Activated naive CD4-positive, alpha-beta T cell treated with anti-CD3 and anti-CD28 coated beads for 36 hours (primary cell): ENCODE measurements at regions of chr4 and their contacts with region 1.

Region 1: GRCh38 chr4:122922877-122923511 is 597 bp upstream of the NUDT6 start:
- DNase-seq: peak; percentile 94
- H3K4me3 Mint-ChIP-seq: peak overlapping the region; percentile 99
- H3K27ac Mint-ChIP-seq: peak overlapping the region; percentile 87
- H3K4me1 Mint-ChIP-seq: peaks cover 11% of the 10 kb centered on the region
- H3K27me3 Mint-ChIP-seq: peaks cover 2% of the 10 kb centered on the region

Region 2: GRCh38 chr4:121823505-121824170 is 1099.4 kb before region 1 on chr4 and contains the start of gene CCNA2:
- CTCF ChIA-PET with region 1: no interaction called
- intact Hi-C with region 1: loop called (anchors 5 kb)
- DNase-seq: peak; percentile 99
- H3K4me3 Mint-ChIP-seq: peak within 1 kb of the TSS; percentile 98
- H3K27ac Mint-ChIP-seq: peak within 1 kb of the TSS; percentile 86
- H3K4me1 Mint-ChIP-seq: peaks cover 20% of the 10 kb centered on the region
- H3K27me3 Mint-ChIP-seq: no peaks in the 10 kb centered on the region
- total RNA-seq, gene CCNA2: 133 to 138 TPM

Region 3: GRCh38 chr4:122151982-122152710 is 770.8 kb before region 1 on chr4 and contains the start of gene BLTP1:
- CTCF ChIA-PET with region 1: no interaction called
- intact Hi-C with region 1: loop called (anchors 1 kb)
- DNase-seq: peak; percentile 88
- H3K4me3 Mint-ChIP-seq: peak within 1 kb of the TSS; percentile 95
- H3K27ac Mint-ChIP-seq: peak within 1 kb of the TSS; percentile 96
- H3K4me1 Mint-ChIP-seq: peaks cover 52% of the 10 kb centered on the region
- H3K27me3 Mint-ChIP-seq: no peaks in the 10 kb centered on the region
- total RNA-seq, gene BLTP1: 20.5 to 23.6 TPM

Region 4: GRCh38 chr4:122458625-122459024 is 464.4 kb before region 1 on chr4:
- CTCF ChIA-PET with region 1: no interaction called
- intact Hi-C with region 1: loop called (anchors 2 kb)
- DNase-seq: peak; percentile 82
- H3K4me3 Mint-ChIP-seq: peak overlapping the region; percentile 68
- H3K27ac Mint-ChIP-seq: peak overlapping the region; percentile 99
- H3K4me1 Mint-ChIP-seq: peaks cover 43% of the 10 kb centered on the region
- H3K27me3 Mint-ChIP-seq: no peaks in the 10 kb centered on the region

Region 5: GRCh38 chr4:122716825-122717448 is 206.1 kb before region 1 on chr4:
- CTCF ChIA-PET with region 1: interaction called, 3 read pairs
- intact Hi-C with region 1: loop called (anchors 5 kb)
- DNase-seq: peak; percentile 94
- H3K4me3 Mint-ChIP-seq: no peak overlapping the region
- H3K27ac Mint-ChIP-seq: peak overlapping the region; percentile 65
- H3K4me1 Mint-ChIP-seq: peaks cover 41% of the 10 kb centered on the region
- H3K27me3 Mint-ChIP-seq: no peaks in the 10 kb centered on the region

Region 6: GRCh38 chr4:122764821-122765215 is 158.2 kb before region 1 on chr4:
- CTCF ChIA-PET with region 1: interaction called, 5 read pairs
- intact Hi-C with region 1: loop called (anchors 1 kb)
- DNase-seq: no peak
- H3K4me3 Mint-ChIP-seq: no peak overlapping the region
- H3K27ac Mint-ChIP-seq: peak overlapping the region; percentile 50
- H3K4me1 Mint-ChIP-seq: peaks cover 30% of the 10 kb centered on the region
- H3K27me3 Mint-ChIP-seq: no peaks in the 10 kb centered on the region

Region 7: GRCh38 chr4:122827879-122828601 is 95.0 kb before region 1 on chr4:
- CTCF ChIA-PET with region 1: no interaction called
- intact Hi-C with region 1: loop called (anchors 1 kb)
- DNase-seq: peak; percentile 71
- H3K4me3 Mint-ChIP-seq: peak overlapping the region; percentile 78
- H3K27ac Mint-ChIP-seq: peak overlapping the region; percentile 9
- H3K4me1 Mint-ChIP-seq: peaks cover 12% of the 10 kb centered on the region
- H3K27me3 Mint-ChIP-seq: peaks cover 74% of the 10 kb centered on the region

Region 8: DNA sequence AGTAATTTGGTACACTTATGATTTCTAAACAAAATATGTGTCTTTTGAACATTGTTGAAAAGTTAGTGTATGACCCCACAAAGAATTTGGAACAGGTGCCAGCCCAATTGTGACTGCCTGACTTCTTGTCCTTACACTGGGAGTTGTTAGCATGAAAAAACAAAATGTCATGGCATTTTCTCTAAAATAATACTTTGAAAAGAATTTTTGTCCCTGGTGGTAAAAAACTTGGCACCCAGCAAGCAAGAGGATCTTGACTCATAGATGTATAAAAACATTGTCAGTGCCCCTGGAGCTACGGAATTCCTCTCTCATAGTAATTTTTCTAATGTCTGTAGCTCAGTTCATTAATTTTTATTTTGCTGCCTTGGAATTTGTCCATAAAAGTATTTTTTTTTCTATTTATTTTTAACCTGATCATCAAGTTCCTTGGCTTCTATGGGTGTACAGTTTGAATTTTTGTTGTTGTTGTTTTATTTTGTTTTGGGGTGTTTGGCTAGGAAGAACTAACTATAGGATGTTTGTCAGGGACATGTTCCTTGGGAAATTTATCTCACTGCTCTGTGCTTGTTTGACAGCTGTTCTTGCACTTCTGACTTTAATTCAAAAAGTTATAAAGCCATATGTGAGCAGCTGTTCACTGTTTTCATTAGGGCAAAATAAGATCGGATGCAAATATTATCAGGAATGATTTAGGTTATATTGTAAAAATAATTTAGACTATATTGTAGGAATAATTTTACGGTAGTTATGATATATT is 94.8 kb after region 1 on chr4:
- CTCF ChIA-PET with region 1: no interaction called
- intact Hi-C with region 1: no loop called
- DNase-seq: no peak
- H3K4me3 Mint-ChIP-seq: no peak overlapping the region
- H3K27ac Mint-ChIP-seq: no peak overlapping the region
- H3K4me1 Mint-ChIP-seq: no peaks in the 10 kb centered on the region
- H3K27me3 Mint-ChIP-seq: no peaks in the 10 kb centered on the region